ENCODE measurements at regions of chr11 and their contacts with region 1.

Region 1: GRCh38 chr11:65487413-65488272 is 11.2 kb upstream of the MALAT1 start:
- DNase-seq: peak; percentile 100
- H3K4me3 ChIP-seq: peak overlapping the region; percentile 28
- CTCF ChIP-seq: no peak

Region 2: GRCh38 chr11:65314501-65315203 is 173.0 kb before region 1 on chr11 and contains the start of gene CDC42EP2:
- CTCF ChIA-PET with region 1: no interaction called
- POLR2A ChIA-PET with region 1: no interaction called
- DNase-seq: no peak
- H3K4me3 ChIP-seq: peak within 1 kb of the TSS; percentile 87
- CTCF ChIP-seq: no peak

Region 3: GRCh38 chr11:65448418-65449105 is 39.1 kb before region 1 on chr11:
- CTCF ChIA-PET with region 1: interaction called, 4 read pairs
- POLR2A ChIA-PET with region 1: interaction called, 10 read pairs
- DNase-seq: no peak
- H3K4me3 ChIP-seq: no peak overlapping the region
- CTCF ChIP-seq: no peak

Region 4: GRCh38 chr11:65454696-65455456 is 32.8 kb before region 1 on chr11:
- CTCF ChIA-PET with region 1: interaction called, 4 read pairs
- POLR2A ChIA-PET with region 1: interaction called, 18 read pairs
- DNase-seq: no peak
- H3K4me3 ChIP-seq: peak overlapping the region; percentile 65
- CTCF ChIP-seq: peak; percentile 19

Region 5: GRCh38 chr11:65471410-65471762 is 16.3 kb before region 1 on chr11:
- CTCF ChIA-PET with region 1: interaction called, 96 read pairs
- POLR2A ChIA-PET with region 1: interaction called, 193 read pairs
- DNase-seq: no peak
- H3K4me3 ChIP-seq: peak overlapping the region; percentile 42
- CTCF ChIP-seq: peak; percentile 73

Region 6: GRCh38 chr11:65477149-65477965 is 10.3 kb before region 1 on chr11:
- CTCF ChIA-PET with region 1: interaction called, 96 read pairs
- POLR2A ChIA-PET with region 1: interaction called, 193 read pairs
- DNase-seq: no peak
- H3K4me3 ChIP-seq: peak overlapping the region; percentile 78
- CTCF ChIP-seq: no peak

Measured in AG04449 (cell line).